ENCODE measurements at regions of chr12 and their contacts with region 1.

Region 1: DNA sequence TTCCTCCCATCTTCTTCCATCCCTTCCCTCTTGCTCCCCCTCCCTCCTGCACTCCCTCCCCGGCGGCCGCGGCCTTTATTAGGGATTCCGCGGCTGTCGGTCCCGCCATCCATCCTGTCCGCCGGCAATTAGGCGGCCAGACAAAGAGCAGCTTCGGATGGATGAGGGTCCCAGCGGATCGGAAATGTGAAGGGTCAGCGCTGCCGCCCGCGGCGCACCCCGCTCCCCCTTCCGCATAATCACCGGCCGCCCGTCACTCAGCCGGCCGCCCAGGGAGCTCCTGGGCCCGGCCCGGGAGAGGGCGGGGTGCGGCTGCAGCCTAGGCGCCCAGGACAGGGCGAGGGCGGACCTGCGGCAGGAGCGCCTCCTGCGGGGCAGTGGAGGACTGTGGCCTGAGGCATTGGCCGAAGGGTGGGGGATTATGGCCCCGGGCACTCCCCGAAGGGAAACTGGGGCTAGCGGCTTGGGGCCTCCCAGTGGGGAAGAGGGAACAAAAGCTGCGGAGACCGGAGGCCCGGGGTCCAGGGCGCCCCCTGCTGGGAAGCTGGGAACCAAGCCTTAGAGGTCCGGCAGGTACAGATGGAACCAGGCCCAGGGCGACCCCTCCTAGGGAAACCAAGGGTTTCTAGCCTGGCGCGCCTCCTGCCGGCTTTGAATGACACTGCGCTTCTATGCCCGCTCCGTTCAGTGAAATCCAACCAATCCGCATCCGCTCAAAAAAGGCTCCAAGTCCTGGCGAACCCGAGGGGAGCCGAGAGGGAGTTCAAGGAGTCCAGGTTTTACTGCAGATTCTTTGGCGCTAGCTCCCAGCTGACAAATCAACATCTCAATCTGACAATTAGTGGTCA is 4.4 kb upstream of the DNAJC22 start:
- DNase-seq: peak; percentile 96
- H3K4me3 ChIP-seq: peak overlapping the region; percentile 37 to 52
- H3K27ac ChIP-seq: no peak overlapping the region
- H3K4me1 ChIP-seq: peaks cover 14 to 39% of the 10 kb centered on the region in 2 experiments; a peak in 2 of 4 replicates
- H3K27me3 ChIP-seq: peaks cover 5% of the 10 kb centered on the region; the same call in 1 of the 2 replicates
- CTCF ChIP-seq: peak; percentile 95
- EP300 ChIP-seq: no peak
- RAD21 ChIP-seq: peak; percentile 71

Region 2: GRCh38 chr12:49264738-49265515 is 77.4 kb before region 1 on chr12 and contains the start of gene TUBA1C:
- CTCF ChIA-PET with region 1: interaction called, 24 read pairs
- POLR2A ChIA-PET with region 1: no interaction called
- DNase-seq: no peak
- H3K4me3 ChIP-seq: no peak within 1 kb of the TSS
- H3K27ac ChIP-seq: peak within 1 kb of the TSS in 1 of 2 experiments; percentile 83; a peak in 2 of 4 replicates
- H3K4me1 ChIP-seq: peaks cover 0 to 36% of the 10 kb centered on the region in 2 experiments; a peak in 2 of 4 replicates
- H3K27me3 ChIP-seq: no peaks in the 10 kb centered on the region
- CTCF ChIP-seq: no peak
- EP300 ChIP-seq: no peak
- RAD21 ChIP-seq: no peak
- polyA plus RNA-seq, gene TUBA1C: 3.3 and 4.6 TPM in 2 replicates

Region 3: GRCh38 chr12:49288412-49288853 is 53.9 kb before region 1 on chr12:
- CTCF ChIA-PET with region 1: interaction called, 658 read pairs
- POLR2A ChIA-PET with region 1: interaction called, 7 read pairs
- DNase-seq: peak; percentile 76
- H3K4me3 ChIP-seq: no peak overlapping the region; a peak in 1 of 4 replicates
- H3K27ac ChIP-seq: no peak overlapping the region
- H3K4me1 ChIP-seq: peaks cover 6 to 18% of the 10 kb centered on the region in 2 experiments; a peak in 3 of 4 replicates
- H3K27me3 ChIP-seq: no peaks in the 10 kb centered on the region
- CTCF ChIP-seq: peak; percentile 92
- EP300 ChIP-seq: no peak
- RAD21 ChIP-seq: peak; percentile 87

Region 4: GRCh38 chr12:49331380-49332222 is 10.7 kb before region 1 on chr12:
- CTCF ChIA-PET with region 1: interaction called, 88 read pairs
- POLR2A ChIA-PET with region 1: interaction called, 3 read pairs
- DNase-seq: peak; percentile 81
- H3K4me3 ChIP-seq: peak overlapping the region in 1 of 2 experiments; percentile 25; a peak in 1 of 4 replicates
- H3K27ac ChIP-seq: no peak overlapping the region
- H3K4me1 ChIP-seq: peaks cover 0 to 2% of the 10 kb centered on the region in 2 experiments; a peak in 1 of 4 replicates
- H3K27me3 ChIP-seq: no peaks in the 10 kb centered on the region
- CTCF ChIP-seq: peak; percentile 84
- EP300 ChIP-seq: no peak
- RAD21 ChIP-seq: peak; percentile 80

Region 5: DNA sequence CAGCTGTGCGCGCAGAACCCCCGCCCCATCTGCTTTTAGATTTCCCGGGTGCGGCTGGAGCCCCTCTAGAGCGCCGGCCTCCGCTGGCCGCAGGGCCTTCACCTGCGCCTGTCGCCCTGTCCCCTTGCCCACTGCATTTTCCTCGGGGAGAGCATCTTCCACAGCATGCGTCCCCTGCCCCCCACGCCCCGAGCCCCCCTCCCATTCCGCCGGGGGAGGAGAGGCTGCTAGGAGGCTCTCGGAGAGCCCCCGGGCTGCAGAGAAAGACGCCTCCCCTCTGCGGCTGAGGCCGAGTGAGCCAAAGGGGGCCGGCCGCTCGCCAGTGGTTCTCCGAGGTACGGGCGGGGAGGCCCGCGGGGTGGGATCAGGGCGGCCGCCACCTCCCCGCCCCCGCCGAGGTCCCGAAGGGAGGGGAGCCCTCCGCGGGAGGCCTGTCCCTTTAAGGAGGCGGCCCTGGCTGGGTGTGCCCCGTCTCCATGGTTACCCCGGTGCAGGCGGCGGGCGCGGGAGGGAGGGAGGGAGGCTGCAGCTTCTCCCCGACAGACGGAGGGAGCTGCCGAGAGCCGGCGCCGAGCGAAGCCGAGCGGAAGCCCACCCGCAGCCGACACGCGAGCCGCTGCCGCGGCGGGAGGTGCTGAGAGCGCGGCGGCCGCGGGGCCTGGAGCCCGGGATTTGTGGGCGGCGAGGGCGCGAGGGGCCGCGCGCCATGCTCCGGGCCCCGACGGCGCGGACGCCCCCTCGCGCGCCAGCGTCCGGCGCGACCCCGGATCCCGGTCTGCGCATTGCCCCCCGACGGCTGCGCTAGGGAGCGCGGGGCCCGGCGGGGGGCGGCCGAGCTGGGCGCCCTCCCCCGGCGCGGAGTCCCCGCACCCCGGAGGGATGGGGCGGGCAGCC is 196.5 kb after region 1 on chr12 and contains the start of gene KCNH3:
- CTCF ChIA-PET with region 1: interaction called, 10 read pairs
- POLR2A ChIA-PET with region 1: no interaction called
- DNase-seq: peak; percentile 93
- H3K4me3 ChIP-seq: peak within 1 kb of the TSS; percentile 53 to 55
- H3K27ac ChIP-seq: no peak within 1 kb of the TSS
- H3K4me1 ChIP-seq: peaks cover 0 to 11% of the 10 kb centered on the region in 2 experiments; a peak in 1 of 4 replicates
- H3K27me3 ChIP-seq: no peaks in the 10 kb centered on the region
- CTCF ChIP-seq: no peak
- EP300 ChIP-seq: no peak
- RAD21 ChIP-seq: no peak
- polyA plus RNA-seq, gene KCNH3: 3.2 and 3.7 TPM in 2 replicates